Mammary epithelial cell (primary cell): ENCODE measurements at regions of chr4 and their contacts with region 1.

Region 1: DNA sequence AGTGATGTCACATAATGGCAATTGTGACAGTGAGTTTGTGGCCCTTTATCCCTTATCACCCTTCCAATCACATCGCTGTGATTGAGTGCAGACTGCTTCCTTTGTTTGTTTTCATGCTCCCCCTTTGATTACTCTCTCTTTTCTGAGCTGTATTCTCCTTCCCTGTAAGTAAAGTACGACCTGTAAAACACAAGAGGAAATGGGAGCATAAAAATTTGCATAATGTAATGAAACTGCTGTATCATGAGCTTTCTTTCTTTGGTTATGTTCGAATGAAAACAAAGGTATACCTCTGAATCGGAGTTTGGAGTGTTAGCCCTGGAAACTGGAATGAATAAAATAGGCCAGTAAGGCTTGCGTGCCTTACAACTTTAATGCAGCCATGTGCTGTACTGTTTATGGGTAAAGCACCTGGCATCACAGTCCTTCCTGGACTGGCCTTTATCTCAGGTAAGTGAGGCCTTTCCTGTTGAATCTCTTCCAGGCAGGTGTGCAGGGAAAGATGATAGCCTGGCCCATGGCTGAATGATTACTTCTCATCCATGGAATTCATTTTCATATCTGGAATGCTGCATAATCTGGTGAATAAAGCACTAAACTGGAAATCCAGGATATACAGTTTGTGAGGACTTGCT is 26.6 kb upstream of the HS3ST1 start:
- DNase-seq: no peak
- H3K4me3 ChIP-seq: no peak overlapping the region
- H3K27ac ChIP-seq: no peak overlapping the region
- H3K4me1 ChIP-seq: peaks cover 11% of the 10 kb centered on the region
- H3K27me3 ChIP-seq: no peaks in the 10 kb centered on the region
- CTCF ChIP-seq: no peak

Region 2: GRCh38 chr4:11367371-11367770 is 87.9 kb before region 1 on chr4:
- CTCF ChIA-PET with region 1: no interaction called
- dilution Hi-C with region 1: no loop called
- in situ Hi-C with region 1: no loop called
- intact Hi-C with region 1: no loop called
- DNase-seq: peak; percentile 12
- H3K4me3 ChIP-seq: no peak overlapping the region
- H3K27ac ChIP-seq: no peak overlapping the region
- H3K4me1 ChIP-seq: no peaks in the 10 kb centered on the region
- H3K27me3 ChIP-seq: peaks cover 2% of the 10 kb centered on the region
- CTCF ChIP-seq: no peak

Region 3: GRCh38 chr4:11532138-11532537 is 76.8 kb after region 1 on chr4:
- CTCF ChIA-PET with region 1: no interaction called
- dilution Hi-C with region 1: no loop called
- in situ Hi-C with region 1: no loop called
- intact Hi-C with region 1: loop called (anchors 2 kb)
- DNase-seq: no peak
- H3K4me3 ChIP-seq: no peak overlapping the region
- H3K27ac ChIP-seq: no peak overlapping the region
- H3K4me1 ChIP-seq: no peaks in the 10 kb centered on the region
- H3K27me3 ChIP-seq: no peaks in the 10 kb centered on the region
- CTCF ChIP-seq: no peak